AG04450 (cell line): ENCODE measurements at regions of chr14 and their contacts with region 1.

Region 1: GRCh38 chr14:81485372-81485771 is 48.3 kb downstream of the SEL1L start:
- DNase-seq: no peak
- H3K4me3 ChIP-seq: no peak overlapping the region
- H3K27ac ChIP-seq: no peak overlapping the region
- H3K27me3 ChIP-seq: no peaks in the 10 kb centered on the region
- CTCF ChIP-seq: no peak

Region 2: DNA sequence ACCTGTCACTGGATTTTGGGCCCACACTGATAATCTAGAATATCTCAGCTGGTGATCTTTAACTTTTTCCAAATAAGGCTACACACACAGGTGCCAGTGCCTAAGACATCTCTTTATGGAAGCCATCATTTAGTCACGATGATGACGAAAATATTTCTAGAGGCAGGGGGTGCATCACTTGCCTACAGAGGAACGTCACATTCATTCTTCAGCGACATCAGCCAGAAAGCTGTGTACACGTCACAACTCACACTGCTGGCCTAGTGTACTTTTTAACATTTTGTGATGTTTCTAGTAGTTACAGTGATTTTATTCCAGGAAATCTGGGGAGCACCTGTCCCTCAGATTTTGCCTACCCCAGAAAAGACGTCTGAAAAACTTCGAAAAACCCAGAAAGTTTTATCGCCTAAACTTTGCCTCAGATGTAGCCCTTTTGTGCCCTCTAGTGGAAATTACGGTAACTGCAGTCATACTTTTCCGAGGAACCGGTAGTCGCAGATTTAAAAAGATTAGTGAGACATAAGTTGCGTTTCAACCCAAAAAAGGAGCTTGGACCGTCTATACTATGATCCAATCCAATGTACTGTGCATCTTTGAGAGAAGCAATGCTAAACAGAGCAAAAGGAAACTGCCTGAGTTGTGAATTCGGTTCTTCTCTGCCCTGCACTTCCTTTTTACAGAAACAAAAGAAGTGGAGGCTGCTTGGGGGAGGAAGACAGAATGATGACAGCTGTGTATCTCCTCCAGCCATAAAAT is 20.9 kb before region 1 on chr14:
- CTCF ChIA-PET with region 1: interaction called, 40 read pairs
- POLR2A ChIA-PET with region 1: interaction called, 3 read pairs
- DNase-seq: peak; percentile 30
- H3K4me3 ChIP-seq: peak overlapping the region; percentile 62
- H3K27ac ChIP-seq: no peak overlapping the region
- H3K27me3 ChIP-seq: no peaks in the 10 kb centered on the region
- CTCF ChIP-seq: peak; percentile 88